Heart left ventricle (tissue), 16 donors: ENCODE measurements at regions of chr4 and their contacts with region 1.

Region 1: DNA sequence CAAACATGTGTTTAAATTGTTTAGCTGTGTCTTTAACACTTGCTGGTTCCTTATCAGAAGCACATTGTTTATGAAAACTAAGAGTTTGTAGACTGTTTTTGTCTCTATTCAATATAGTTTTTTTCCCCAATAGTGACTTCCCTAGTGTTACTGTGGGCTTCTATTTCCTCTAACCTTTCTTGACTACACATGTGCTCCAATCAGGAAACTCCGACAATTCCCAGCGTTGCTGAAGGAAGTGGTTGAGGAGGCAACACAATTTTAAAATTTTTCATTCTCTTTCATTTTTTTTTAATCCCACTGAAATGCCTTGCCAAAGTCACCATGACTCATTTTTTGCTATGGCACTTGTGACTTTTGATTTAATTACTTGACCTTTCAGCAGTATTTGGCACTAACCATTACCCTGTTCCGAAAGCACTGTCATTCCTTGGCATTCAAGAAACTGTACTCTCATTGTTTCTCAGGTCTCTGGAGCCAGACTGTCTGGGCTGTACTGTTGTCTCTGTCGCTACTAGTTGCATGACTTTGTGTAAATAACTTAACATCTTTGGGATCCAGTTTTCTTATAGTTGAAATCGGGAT is 67.6 kb upstream of the FREM3 start:
- DNase-seq: peak in 1 of 5 donors; percentile 14
- ATAC-seq: peak in 3 of 4 donors; percentile 75 to 82 (median 79)
- H3K4me3 ChIP-seq: no peak overlapping the region
- H3K27ac ChIP-seq: peak overlapping the region in 5 of 12 donors; percentile 1 to 58 (median 18)
- H3K4me1 ChIP-seq: peaks cover 0 to 7% (median 0%) of the 10 kb centered on the region in 12 donors
- H3K27me3 ChIP-seq: no peaks in the 10 kb centered on the region
- CTCF ChIP-seq: no peak
- POLR2A ChIP-seq: no peak

Region 2: GRCh38 chr4:143575331-143575730 is 192.8 kb before region 1 on chr4:
- intact Hi-C with region 1: loop called in 1 of 10 experiments (anchors 10 kb)
- DNase-seq: no peak
- ATAC-seq: no peak
- H3K4me3 ChIP-seq: no peak overlapping the region
- H3K27ac ChIP-seq: no peak overlapping the region
- H3K4me1 ChIP-seq: no peaks in the 10 kb centered on the region
- H3K27me3 ChIP-seq: no peaks in the 10 kb centered on the region
- CTCF ChIP-seq: no peak
- POLR2A ChIP-seq: no peak

Region 3: DNA sequence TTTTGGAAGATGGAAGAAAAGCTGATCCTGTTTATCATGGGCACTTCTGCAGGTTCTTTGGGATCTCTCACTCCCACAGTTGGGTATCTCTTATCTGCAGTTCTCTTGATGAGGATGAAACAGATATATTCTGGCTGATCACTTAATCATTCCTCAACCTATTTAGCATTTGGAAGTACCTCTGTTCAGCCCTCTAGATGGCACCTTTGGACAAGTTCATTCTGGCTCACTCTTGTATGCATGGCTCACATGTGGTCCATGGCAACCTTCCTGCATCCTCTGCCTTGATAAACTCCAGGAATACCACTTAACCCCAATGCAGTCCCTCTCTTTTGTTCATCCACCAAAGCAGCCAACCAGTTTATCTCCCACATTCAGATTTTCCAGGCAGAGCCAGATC is 180.4 kb before region 1 on chr4:
- intact Hi-C with region 1: loop called in 1 of 10 experiments (anchors 2 kb)
- DNase-seq: no peak
- ATAC-seq: peak in 2 of 4 donors; percentile 57 to 67
- H3K4me3 ChIP-seq: no peak overlapping the region
- H3K27ac ChIP-seq: no peak overlapping the region
- H3K4me1 ChIP-seq: peaks cover 0 to 12% (median 0%) of the 10 kb centered on the region in 12 donors
- H3K27me3 ChIP-seq: no peaks in the 10 kb centered on the region
- CTCF ChIP-seq: peak in 5 of 12 donors; percentile 10 to 41 (median 28)
- POLR2A ChIP-seq: no peak